ENCODE measurements at regions of chr11 and their contacts with region 1.

Region 1: GRCh38 chr11:18027475-18027874 is 14.6 kb upstream of the SERGEF start:
- DNase-seq: no peak

Region 2: DNA sequence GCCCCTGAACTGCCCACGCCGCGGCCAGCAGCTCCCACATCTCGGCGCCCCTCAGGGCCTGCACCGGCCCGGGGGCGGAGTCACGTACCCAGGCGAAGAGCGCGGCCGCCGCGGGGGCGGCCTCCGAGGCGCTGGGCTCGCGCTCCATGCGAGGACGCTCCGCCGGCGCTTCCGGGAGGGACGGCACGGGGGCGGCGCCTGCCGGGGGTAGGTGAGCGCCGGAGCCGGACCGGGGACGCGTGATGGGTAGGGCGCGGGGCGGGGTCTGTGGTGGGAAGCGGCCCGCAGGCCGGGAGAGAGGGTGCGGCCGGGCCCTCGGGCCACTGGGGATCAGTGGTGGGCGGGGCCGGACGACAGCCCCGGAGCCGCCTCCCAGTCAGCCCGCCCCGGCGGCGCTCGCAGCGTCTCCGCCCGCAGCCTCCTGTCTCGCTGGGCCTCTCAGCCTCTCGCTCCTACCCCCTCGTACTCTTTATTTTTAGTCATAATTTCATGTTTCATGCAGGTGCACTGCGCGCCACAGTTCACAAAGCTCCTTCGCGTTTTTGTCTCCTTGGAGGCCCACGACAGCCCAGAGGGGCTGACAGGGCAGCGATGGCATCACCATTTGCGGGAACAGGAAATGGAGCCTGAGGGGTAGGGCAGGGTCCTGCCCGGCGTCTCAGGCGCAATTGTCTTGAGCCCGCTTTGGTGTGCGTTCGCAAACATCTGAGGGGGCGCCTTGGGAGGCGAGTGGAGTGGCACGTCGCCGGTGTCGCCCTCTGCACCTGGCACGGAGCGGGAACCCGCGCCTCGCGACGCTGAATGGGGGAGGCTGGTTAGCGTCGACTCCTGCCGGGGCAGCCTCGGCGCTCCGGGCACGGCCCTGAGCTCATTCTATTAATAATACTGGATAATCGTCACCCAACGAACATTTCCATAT is 14.4 kb before region 1 on chr11 and contains the start of gene SERGEF:
- intact Hi-C with region 1: no loop called
- DNase-seq: peak; percentile 98
- total RNA-seq, gene SERGEF: 32.6 to 37.9 TPM

Region 3: GRCh38 chr11:18054511-18055103 is 27.1 kb after region 1 on chr11:
- intact Hi-C with region 1: loop called in 1 of 2 experiments (anchors 2 kb)
- DNase-seq: no peak

Region 4: DNA sequence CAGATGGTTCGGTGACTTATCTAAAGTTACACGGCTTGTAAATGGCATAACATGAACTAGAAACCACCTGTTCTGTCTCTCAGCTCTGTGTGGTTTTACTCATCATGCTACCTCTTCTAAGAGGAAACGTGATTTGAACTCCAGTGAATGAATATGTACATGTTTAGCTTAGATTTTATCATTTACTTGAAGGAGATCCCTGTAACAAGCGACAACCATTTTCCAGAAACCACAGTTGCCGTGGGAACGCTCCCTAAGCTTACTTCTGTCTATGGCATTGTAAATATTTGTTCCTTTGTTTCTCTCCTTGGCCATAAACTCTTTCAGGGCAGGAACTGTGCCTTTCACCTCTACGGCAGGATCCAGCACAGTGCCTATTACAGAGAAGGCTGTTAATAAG is 35.6 kb after region 1 on chr11:
- intact Hi-C with region 1: loop called in 1 of 2 experiments (anchors 1 kb)
- DNase-seq: no peak

Region 5: DNA sequence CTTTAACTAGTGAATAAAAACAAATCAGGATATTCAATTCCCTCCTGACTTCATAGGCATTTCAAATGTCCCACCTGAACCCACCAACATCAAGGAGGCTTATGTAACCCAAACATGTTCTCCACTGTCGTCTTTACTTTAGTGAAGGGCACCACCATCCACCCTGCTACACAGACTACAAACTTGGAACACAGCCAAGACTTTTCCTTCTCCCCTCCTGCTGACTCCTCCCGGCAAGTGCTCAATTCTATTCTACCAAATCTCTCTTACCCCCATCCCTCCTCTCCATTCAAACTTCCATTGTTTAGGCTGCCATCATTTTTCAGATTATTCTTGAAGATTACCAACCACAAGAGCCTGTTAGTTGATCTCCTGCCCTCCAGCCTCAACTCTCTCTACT is 54.1 kb after region 1 on chr11:
- intact Hi-C with region 1: no loop called
- DNase-seq: no peak

Measured in posterior vena cava (tissue), 2 donors.